Caco-2 (cell line): ENCODE measurements at regions of chr7 and their contacts with region 1.

Region 1: DNA sequence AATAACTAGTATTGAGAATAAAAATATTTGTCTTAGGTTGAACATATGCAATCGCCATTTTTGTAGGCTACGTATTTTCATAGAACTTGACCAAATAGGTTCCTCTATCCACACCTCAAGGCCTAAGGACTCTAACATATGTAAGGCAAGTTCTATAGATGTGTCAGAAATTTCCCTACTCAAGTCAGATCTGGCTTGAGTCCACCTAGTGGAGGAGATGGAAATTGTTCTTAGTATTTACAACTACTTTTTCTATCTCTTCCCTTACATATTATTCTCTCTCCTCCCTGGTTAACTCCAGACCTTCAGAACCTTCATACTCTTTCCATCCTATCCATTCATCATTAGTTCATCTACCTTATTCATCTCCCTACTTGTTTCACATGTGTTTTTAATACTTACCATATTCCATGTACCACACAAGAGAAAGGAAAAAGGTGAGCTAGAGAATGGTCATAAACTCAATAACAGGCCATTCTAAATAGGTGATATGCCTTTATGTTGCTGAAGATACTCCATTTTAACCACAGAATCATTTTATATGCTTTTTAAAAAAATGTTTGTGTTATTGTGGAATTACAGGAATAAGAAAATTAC is 174.5 kb upstream of the HDAC9 start:
- DNase-seq: peak in 1 of 2 experiments; percentile 28
- H3K4me3 ChIP-seq: no peak overlapping the region
- H3K4me3 Mint-ChIP-seq: no peak overlapping the region
- H3K27ac Mint-ChIP-seq: no peak overlapping the region
- H3K4me1 ChIP-seq: no peaks in the 10 kb centered on the region
- H3K4me1 Mint-ChIP-seq: no peaks in the 10 kb centered on the region
- H3K27me3 ChIP-seq: no peaks in the 10 kb centered on the region; the same call in 1 of the 2 replicates
- H3K27me3 Mint-ChIP-seq: peaks cover 7% of the 10 kb centered on the region
- CTCF ChIP-seq: peak; percentile 45 to 73

Region 2: DNA sequence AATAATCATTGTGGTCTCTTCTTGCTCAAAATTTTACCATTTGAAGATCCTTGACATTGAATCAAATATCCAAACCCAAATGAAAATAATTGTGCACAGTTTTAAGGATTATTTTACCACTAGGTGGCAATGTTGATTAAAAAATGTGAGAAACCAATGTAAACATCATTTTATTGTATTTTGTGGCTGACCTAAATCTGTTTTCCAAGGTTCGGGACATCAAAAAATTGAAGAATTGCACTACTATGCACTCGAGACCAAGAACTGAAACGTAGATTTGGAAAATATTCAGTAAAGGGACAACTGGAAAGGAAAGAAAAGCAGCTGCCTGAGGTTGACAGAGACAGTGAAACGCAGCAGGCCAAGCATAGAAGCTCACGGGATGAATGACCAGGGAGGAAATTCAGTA is 640.1 kb before region 1 on chr7:
- CTCF ChIA-PET with region 1: no interaction called
- POLR2A ChIA-PET with region 1: no interaction called
- intact Hi-C with region 1: loop called (anchors 1 kb)
- DNase-seq: peak in 1 of 2 experiments; percentile 15
- H3K4me3 ChIP-seq: no peak overlapping the region
- H3K4me3 Mint-ChIP-seq: no peak overlapping the region
- H3K27ac Mint-ChIP-seq: no peak overlapping the region
- H3K4me1 ChIP-seq: peaks cover 20% of the 10 kb centered on the region
- H3K4me1 Mint-ChIP-seq: peaks cover 10% of the 10 kb centered on the region
- H3K27me3 ChIP-seq: no peaks in the 10 kb centered on the region
- H3K27me3 Mint-ChIP-seq: no peaks in the 10 kb centered on the region
- CTCF ChIP-seq: peak; percentile 9 to 64

Region 3: GRCh38 chr7:17971411-17971810 is 349.7 kb before region 1 on chr7:
- CTCF ChIA-PET with region 1: no interaction called
- POLR2A ChIA-PET with region 1: no interaction called
- intact Hi-C with region 1: loop called (anchors 1 kb)
- DNase-seq: no peak
- H3K4me3 ChIP-seq: no peak overlapping the region
- H3K4me3 Mint-ChIP-seq: no peak overlapping the region
- H3K27ac Mint-ChIP-seq: no peak overlapping the region
- H3K4me1 ChIP-seq: peaks cover 35% of the 10 kb centered on the region
- H3K4me1 Mint-ChIP-seq: peaks cover 16% of the 10 kb centered on the region
- H3K27me3 ChIP-seq: no peaks in the 10 kb centered on the region
- H3K27me3 Mint-ChIP-seq: no peaks in the 10 kb centered on the region
- CTCF ChIP-seq: no peak

Region 4: DNA sequence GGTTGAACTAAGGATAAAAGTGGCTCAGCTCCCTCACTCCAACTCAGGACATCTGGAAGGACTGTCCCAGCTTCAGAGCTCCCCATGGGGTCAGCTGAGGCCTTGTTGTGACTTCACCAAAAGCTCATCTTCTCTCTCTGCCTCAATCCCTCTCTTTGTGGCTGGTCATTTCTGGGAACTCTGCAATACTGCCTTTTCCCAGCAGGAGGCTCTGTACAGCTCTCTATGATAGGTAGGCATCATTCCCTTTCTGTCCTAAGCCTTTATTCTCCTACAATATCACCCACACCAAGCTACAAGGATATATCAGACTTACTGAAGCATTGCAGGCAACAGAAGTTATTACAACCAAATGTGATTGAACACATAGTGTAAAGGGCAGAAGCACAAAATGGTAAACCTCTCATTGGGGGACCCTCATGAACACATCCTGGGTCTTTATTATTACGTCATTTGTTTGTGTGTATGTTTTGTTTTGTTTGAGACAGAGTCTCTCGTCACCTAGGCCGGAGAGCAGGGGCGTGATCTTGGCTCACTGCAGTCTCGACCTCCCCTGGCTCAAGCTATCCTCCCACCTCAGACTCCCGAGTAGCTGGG is 256.7 kb before region 1 on chr7:
- CTCF ChIA-PET with region 1: no interaction called
- POLR2A ChIA-PET with region 1: no interaction called
- intact Hi-C with region 1: loop called (anchors 10 kb)
- DNase-seq: peak in 1 of 2 experiments; percentile 39
- H3K4me3 ChIP-seq: no peak overlapping the region
- H3K4me3 Mint-ChIP-seq: no peak overlapping the region
- H3K27ac Mint-ChIP-seq: no peak overlapping the region
- H3K4me1 ChIP-seq: no peaks in the 10 kb centered on the region
- H3K4me1 Mint-ChIP-seq: no peaks in the 10 kb centered on the region
- H3K27me3 ChIP-seq: no peaks in the 10 kb centered on the region
- H3K27me3 Mint-ChIP-seq: peaks cover 8% of the 10 kb centered on the region
- CTCF ChIP-seq: peak; percentile 45 to 46

Region 5: GRCh38 chr7:18212758-18213157 is 108.3 kb before region 1 on chr7:
- CTCF ChIA-PET with region 1: no interaction called
- POLR2A ChIA-PET with region 1: no interaction called
- intact Hi-C with region 1: loop called (anchors 1 kb)
- DNase-seq: no peak
- H3K4me3 ChIP-seq: no peak overlapping the region
- H3K4me3 Mint-ChIP-seq: no peak overlapping the region
- H3K27ac Mint-ChIP-seq: no peak overlapping the region
- H3K4me1 ChIP-seq: no peaks in the 10 kb centered on the region
- H3K4me1 Mint-ChIP-seq: peaks cover 6% of the 10 kb centered on the region
- H3K27me3 ChIP-seq: no peaks in the 10 kb centered on the region
- H3K27me3 Mint-ChIP-seq: peaks cover 4% of the 10 kb centered on the region
- CTCF ChIP-seq: no peak